ENCODE measurements at regions of chr22 and their contacts with region 1.

Region 1: DNA sequence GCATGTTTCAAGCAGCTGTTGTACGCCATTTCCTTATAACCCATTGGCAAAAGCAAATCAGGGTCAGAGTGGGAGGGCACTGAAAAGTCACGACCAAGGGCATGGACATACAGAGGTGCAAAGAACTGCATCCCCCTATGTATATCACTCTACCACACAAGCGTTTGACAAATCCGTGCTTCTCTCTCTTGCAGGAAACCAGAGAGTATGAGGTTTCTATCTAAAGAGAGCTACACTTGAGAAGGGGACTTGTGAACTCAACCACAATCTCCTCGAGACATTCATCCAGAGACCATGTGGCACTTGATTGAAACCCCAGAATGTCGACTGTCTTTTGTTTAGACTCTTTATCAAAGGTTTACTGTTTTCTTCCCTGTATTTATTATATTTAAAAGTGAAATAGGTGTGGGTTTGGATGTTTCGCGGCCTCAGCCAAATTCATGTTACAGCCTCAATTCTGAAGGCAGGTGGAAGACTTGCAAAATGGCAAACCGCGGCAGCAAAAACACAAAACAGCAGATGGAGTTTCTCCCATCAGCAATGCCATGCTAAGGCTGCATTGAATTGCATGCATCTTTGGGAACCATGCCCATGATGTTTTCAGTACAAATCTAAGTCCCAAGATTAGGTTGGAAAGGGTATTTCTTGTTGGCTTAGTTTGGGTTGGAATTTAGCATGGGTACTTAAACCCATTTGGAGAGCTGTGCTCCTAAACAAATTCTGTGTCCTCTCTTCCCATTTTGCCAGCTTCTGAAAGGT is 48.8 kb upstream of the ASPHD2 start:
- DNase-seq: no peak
- CTCF ChIP-seq: no peak

Region 2: GRCh38 chr22:26321469-26321913 is 58.8 kb before region 1 on chr22:
- in situ Hi-C with region 1: no loop called
- DNase-seq: no peak
- CTCF ChIP-seq: no peak

Region 3: GRCh38 chr22:26461188-26461810 is 81.0 kb after region 1 on chr22:
- in situ Hi-C with region 1: loop called (anchors 5 kb)
- DNase-seq: peak; percentile 63
- CTCF ChIP-seq: peak; percentile 67